Caco-2 (cell line): ENCODE measurements at regions of chr17 and their contacts with region 1.

Region 1: GRCh38 chr17:50361561-50362480 is 11.2 kb downstream of the MRPL27 start:
- DNase-seq: peak; percentile 80 to 81
- H3K4me3 ChIP-seq: no peak overlapping the region
- H3K4me3 Mint-ChIP-seq: no peak overlapping the region
- H3K27ac Mint-ChIP-seq: peak overlapping the region; percentile 23
- H3K4me1 ChIP-seq: no peaks in the 10 kb centered on the region; the same call in 1 of the 2 replicates
- H3K4me1 Mint-ChIP-seq: peaks cover 10% of the 10 kb centered on the region
- H3K27me3 ChIP-seq: no peaks in the 10 kb centered on the region
- H3K27me3 Mint-ChIP-seq: no peaks in the 10 kb centered on the region
- CTCF ChIP-seq: peak; percentile 97 to 98

Region 2: DNA sequence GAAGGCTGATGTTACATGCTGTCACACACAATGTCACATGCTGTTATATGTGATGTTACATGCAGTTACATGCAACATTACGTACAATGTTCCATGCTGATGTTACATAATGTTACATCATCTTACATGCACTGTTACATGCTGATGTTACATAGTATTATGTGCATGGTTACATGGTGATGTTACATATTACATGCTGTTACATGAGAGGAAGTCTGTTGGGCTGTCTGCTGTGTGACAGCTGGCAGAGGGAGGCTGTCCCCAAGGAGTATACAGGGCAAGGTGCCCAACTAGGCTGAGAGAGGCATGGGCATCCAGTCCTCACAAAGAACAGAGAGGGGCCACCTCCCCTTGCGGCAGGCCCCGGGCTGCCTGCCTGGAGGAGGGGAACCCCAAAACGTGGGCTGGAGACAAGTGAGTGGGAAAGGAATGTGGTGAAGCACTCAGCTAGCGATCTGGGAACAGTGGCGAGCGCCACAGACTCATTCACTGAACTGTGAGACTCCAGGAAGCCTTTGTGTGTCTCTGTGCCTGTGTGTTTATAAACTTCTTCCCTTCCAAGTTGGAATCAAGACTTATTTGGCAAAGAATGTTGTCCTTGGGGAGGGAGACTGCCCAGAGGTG is 56.9 kb before region 1 on chr17:
- CTCF ChIA-PET with region 1: no interaction called
- POLR2A ChIA-PET with region 1: no interaction called
- intact Hi-C with region 1: no loop called
- DNase-seq: no peak
- H3K4me3 ChIP-seq: no peak overlapping the region
- H3K4me3 Mint-ChIP-seq: no peak overlapping the region
- H3K27ac Mint-ChIP-seq: peak overlapping the region; percentile 41
- H3K4me1 ChIP-seq: peaks cover 5% of the 10 kb centered on the region; the same call in 1 of the 2 replicates
- H3K4me1 Mint-ChIP-seq: peaks cover 20% of the 10 kb centered on the region
- H3K27me3 ChIP-seq: no peaks in the 10 kb centered on the region
- H3K27me3 Mint-ChIP-seq: no peaks in the 10 kb centered on the region
- CTCF ChIP-seq: no peak

Region 3: DNA sequence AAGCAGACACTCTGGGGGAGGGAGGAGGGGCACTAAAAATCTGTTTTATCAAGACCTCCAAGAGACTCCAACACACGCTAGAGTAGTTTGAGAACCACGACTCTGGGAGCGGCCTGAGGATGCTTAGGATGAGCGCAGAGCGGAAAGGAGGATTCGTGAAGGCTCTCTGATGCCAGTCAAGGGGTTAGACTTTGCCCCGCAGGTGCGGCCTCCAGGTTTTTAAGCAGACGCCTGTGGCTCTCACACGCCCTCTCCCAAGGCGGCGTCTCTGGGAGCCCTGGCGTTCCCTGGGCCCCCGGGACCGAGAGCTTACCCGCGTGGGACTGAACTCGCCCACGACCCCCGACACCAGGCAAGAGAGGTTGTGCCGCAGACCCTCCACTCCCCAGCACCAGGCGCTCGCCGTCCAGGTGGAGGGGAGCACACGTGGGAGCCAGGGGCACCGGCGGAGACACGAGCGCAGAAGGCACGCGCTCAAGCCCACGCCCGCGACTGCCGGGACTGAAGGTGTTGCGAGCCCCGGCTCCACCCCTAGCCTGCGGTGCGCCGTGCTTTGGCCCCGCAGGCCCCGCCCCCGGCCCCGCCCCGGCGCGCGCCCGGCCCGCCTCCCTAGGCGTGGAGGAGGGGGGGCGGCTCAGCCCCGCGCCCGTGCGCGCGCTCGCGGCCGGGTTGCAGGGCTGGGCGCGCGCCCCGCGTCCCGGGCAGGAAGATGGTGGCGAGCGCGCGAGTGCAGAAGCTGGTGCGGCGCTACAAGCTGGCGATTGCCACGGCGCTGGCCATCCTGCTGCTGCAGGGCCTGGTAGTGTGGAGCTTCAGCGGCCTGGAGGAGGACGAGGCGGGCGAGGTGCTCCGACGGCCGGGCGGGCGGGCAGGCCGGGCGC is 16.1 kb before region 1 on chr17 and contains the start of gene XYLT2:
- CTCF ChIA-PET with region 1: interaction called, 12 read pairs
- POLR2A ChIA-PET with region 1: interaction called, 14 read pairs
- intact Hi-C with region 1: loop called (anchors 1 kb)
- DNase-seq: peak; percentile 94 to 99
- H3K4me3 ChIP-seq: peak within 1 kb of the TSS; percentile 85
- H3K4me3 Mint-ChIP-seq: peak within 1 kb of the TSS; percentile 96
- H3K27ac Mint-ChIP-seq: peak within 1 kb of the TSS; percentile 81
- H3K4me1 ChIP-seq: peaks cover 13% of the 10 kb centered on the region
- H3K4me1 Mint-ChIP-seq: peaks cover 22% of the 10 kb centered on the region
- H3K27me3 ChIP-seq: no peaks in the 10 kb centered on the region
- H3K27me3 Mint-ChIP-seq: no peaks in the 10 kb centered on the region
- CTCF ChIP-seq: no peak
- total RNA-seq, gene XYLT2: 72.9 and 75.8 TPM in 2 replicates

Region 4: GRCh38 chr17:50686494-50687199 is 324.8 kb after region 1 on chr17:
- CTCF ChIA-PET with region 1: no interaction called
- POLR2A ChIA-PET with region 1: no interaction called
- intact Hi-C with region 1: loop called (anchors 10 kb)
- DNase-seq: peak; percentile 94 to 98
- H3K4me3 ChIP-seq: peak overlapping the region; percentile 38
- H3K4me3 Mint-ChIP-seq: peak overlapping the region; percentile 77
- H3K27ac Mint-ChIP-seq: peak overlapping the region; percentile 96
- H3K4me1 ChIP-seq: peaks cover 91% of the 10 kb centered on the region
- H3K4me1 Mint-ChIP-seq: peaks cover 70% of the 10 kb centered on the region
- H3K27me3 ChIP-seq: no peaks in the 10 kb centered on the region
- H3K27me3 Mint-ChIP-seq: no peaks in the 10 kb centered on the region
- CTCF ChIP-seq: no peak

Region 5: GRCh38 chr17:50805486-50805885 is 443.7 kb after region 1 on chr17:
- CTCF ChIA-PET with region 1: no interaction called
- POLR2A ChIA-PET with region 1: interaction called, 11 read pairs
- intact Hi-C with region 1: no loop called
- DNase-seq: no peak
- H3K4me3 ChIP-seq: no peak overlapping the region
- H3K4me3 Mint-ChIP-seq: no peak overlapping the region
- H3K27ac Mint-ChIP-seq: no peak overlapping the region
- H3K4me1 ChIP-seq: peaks cover 6% of the 10 kb centered on the region; the same call in 1 of the 2 replicates
- H3K4me1 Mint-ChIP-seq: peaks cover 10% of the 10 kb centered on the region
- H3K27me3 ChIP-seq: no peaks in the 10 kb centered on the region
- H3K27me3 Mint-ChIP-seq: no peaks in the 10 kb centered on the region
- CTCF ChIP-seq: no peak